Stomach (tissue), 19 donors: ENCODE measurements at regions of chr7 and their contacts with region 1.

Region 1: GRCh38 chr7:128387216-128388144 is 22.3 kb downstream of the IMPDH1 start:
- DNase-seq: peak; percentile 75 to 93
- H3K4me3 ChIP-seq: no peak overlapping the region
- H3K27ac ChIP-seq: no peak overlapping the region
- H3K4me1 ChIP-seq: peaks cover 0 to 11% (median 9%) of the 10 kb centered on the region in 4 donors
- H3K27me3 ChIP-seq: peaks cover 0 to 11% (median 0%) of the 10 kb centered on the region in 3 donors
- CTCF ChIP-seq: peak in 5 of 7 experiments; percentile 61 to 81 (median 79)
- EP300 ChIP-seq: no peak
- POLR2A ChIP-seq: no peak

Region 2: DNA sequence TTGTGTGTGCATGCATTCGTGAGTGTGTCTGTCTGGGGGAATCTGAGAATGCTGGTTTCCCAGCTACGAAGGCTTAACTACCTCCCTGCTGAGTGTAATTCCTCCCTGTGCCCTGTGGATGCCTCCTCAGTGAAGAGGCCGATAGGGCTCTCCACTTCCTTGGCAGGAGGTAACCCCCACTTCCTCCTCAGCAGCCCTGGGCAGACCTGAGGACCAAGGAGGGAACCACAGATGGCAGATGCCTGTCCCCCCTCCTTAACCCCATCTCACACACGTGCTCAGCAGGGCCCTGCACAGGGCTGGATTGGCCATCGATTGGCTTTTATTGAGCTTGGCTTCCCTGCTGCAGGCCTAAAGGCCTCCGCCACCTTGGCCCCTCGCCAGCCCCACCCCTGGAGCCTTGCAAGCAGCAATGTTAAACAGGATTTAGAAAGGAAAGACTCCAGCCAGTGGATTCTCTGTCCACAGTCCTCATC is 310.6 kb before region 1 on chr7:
- intact Hi-C with region 1: no loop called
- DNase-seq: peak; percentile 77 to 86
- H3K4me3 ChIP-seq: no peak overlapping the region
- H3K27ac ChIP-seq: no peak overlapping the region
- H3K4me1 ChIP-seq: peaks cover 8 to 16% (median 12%) of the 10 kb centered on the region in 4 donors
- H3K27me3 ChIP-seq: no peaks in the 10 kb centered on the region
- CTCF ChIP-seq: no peak
- EP300 ChIP-seq: no peak
- POLR2A ChIP-seq: no peak

Region 3: GRCh38 chr7:128347647-128348097 is 39.8 kb before region 1 on chr7:
- intact Hi-C with region 1: loop called (anchors 5 kb)
- DNase-seq: peak; percentile 48 to 78
- H3K4me3 ChIP-seq: no peak overlapping the region
- H3K27ac ChIP-seq: no peak overlapping the region
- H3K4me1 ChIP-seq: peaks cover 11 to 35% (median 23%) of the 10 kb centered on the region in 4 donors
- H3K27me3 ChIP-seq: peaks cover 0 to 31% (median 19%) of the 10 kb centered on the region in 3 donors
- CTCF ChIP-seq: peak in 4 of 7 experiments; percentile 31 to 49 (median 41)
- EP300 ChIP-seq: no peak
- POLR2A ChIP-seq: no peak